ENCODE measurements at regions of chr1 and their contacts with region 1.

Region 1: DNA sequence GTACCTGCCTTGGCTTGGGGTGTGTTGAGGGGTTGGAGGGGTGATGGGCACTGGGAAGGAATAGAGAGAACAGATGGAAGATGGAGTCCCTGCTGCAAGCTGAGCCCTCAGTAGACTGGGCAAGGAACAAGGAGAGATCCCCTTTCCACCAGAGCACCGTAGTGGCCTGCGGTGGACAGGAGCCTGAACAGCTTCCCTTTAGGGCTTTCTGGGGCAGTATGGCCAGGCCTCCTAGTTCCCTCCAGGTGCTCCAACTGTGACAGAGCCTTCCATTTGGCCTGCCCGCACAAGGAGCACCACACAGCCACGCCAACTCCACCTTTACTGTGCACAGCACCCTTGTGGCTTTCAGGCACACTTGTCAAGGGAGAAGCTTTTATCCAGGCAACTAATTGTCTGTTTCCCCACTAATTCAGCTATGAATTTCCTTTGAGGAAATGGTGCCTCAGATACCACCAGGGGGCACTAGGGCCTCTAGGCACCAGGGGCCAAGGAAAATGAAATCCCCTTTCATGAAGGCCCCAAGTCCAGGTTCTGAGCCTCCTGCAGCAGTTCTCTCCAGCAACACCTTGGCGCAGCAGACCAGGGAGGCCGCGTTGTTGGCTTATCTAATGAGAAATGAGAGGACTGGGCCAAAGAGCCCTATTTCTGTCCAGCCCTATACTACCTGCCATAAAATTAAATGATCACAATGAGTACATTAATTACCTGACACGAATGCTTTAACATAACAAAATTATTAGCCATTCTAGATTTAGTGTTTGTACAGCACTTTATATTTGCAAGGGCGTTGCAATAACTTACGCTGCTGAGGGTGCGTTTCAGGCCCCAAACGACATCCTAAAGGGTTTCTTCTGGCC is 23.1 kb upstream of the ERI3 start:
- DNase-seq: peak; percentile 63
- ATAC-seq: no peak
- H3K4me3 Mint-ChIP-seq: no peak overlapping the region
- H3K27ac Mint-ChIP-seq: no peak overlapping the region
- H3K4me1 Mint-ChIP-seq: no peaks in the 10 kb centered on the region
- H3K27me3 Mint-ChIP-seq: peaks cover 2% of the 10 kb centered on the region

Region 2: DNA sequence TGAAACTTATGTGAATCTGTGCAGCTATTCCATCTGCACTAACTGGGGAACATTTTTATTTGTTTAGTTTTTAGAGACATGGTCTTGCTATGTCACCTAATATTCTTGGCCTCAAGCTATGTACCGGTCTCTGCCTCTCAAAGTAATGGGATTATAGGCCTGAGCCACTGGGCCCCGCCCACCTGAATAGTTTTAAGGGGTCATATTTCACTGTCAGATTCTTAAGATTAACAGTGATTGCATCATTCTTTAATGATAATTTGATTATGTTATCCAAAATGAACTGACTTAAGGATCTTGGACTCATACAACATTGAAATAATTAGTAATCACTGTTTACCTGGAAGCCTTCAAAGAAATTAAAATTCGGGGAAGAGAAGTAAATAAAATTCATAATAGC is 224.1 kb before region 1 on chr1:
- CTCF ChIA-PET with region 1: no interaction called
- POLR2A ChIA-PET with region 1: no interaction called
- DNase-seq: no peak
- ATAC-seq: no peak
- H3K4me3 Mint-ChIP-seq: no peak overlapping the region
- H3K27ac Mint-ChIP-seq: no peak overlapping the region
- H3K4me1 Mint-ChIP-seq: no peaks in the 10 kb centered on the region
- H3K27me3 Mint-ChIP-seq: peaks cover 21% of the 10 kb centered on the region

Region 3: GRCh38 chr1:44594871-44595746 is 217.0 kb after region 1 on chr1:
- CTCF ChIA-PET with region 1: interaction called, 28 read pairs
- POLR2A ChIA-PET with region 1: interaction called, 3 read pairs
- DNase-seq: peak; percentile 82
- ATAC-seq: peak; percentile 96
- H3K4me3 Mint-ChIP-seq: no peak overlapping the region
- H3K27ac Mint-ChIP-seq: no peak overlapping the region
- H3K4me1 Mint-ChIP-seq: no peaks in the 10 kb centered on the region
- H3K27me3 Mint-ChIP-seq: no peaks in the 10 kb centered on the region

Measured in activated CD8-positive, alpha-beta T cell treated with anti-CD3 and anti-CD28 coated beads, Interleukin-2, amount 10 ng/mL, durations not matched to agents 7 days and 5 days (primary cell).